ENCODE measurements at regions of chr16 and their contacts with region 1.

Region 1: DNA sequence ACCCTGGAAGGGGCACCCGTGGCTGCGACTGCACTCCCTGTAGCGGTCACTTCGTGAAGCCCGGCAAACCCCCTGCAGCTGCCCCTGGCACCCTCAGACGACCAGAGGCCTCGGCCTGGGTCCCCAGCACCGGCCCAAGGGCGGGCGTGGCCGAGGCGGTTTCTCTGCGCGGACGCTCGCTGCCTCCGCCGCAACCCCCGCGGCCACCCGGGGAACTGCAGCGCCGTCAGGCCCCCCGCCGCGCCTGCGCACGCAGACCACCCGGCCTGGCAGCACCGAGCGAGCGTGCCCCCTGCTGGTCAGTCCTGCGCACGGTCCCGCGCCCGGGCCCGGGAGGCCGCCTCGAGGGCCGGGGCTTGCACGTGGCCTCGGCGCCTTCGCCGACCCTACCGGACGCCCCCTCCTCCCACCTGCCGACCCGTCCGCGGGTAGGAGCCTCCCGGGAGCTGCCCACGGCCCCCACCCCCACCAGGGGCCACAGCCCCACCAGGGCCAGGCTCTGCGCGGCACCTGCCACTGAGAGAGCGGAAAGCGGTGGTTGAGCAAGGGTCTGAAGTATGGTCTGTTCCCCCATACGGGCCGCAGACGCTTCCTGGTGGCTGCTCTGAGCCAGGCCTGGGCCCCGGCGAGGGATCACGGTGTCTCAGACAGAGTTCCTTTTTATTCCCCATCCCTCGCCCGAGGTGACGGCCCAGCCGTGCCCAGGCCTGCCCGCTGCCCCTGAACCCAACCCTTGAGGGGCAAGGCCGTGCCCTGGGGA is 11.5 kb upstream of the HS3ST6 start:
- DNase-seq: peak; percentile 96
- ATAC-seq: peak; percentile 98
- H3K4me3 Mint-ChIP-seq: peak overlapping the region; percentile 47
- H3K27ac Mint-ChIP-seq: no peak overlapping the region
- H3K4me1 Mint-ChIP-seq: peaks cover 2% of the 10 kb centered on the region
- H3K27me3 Mint-ChIP-seq: peaks cover under 1% of the 10 kb centered on the region

Region 2: DNA sequence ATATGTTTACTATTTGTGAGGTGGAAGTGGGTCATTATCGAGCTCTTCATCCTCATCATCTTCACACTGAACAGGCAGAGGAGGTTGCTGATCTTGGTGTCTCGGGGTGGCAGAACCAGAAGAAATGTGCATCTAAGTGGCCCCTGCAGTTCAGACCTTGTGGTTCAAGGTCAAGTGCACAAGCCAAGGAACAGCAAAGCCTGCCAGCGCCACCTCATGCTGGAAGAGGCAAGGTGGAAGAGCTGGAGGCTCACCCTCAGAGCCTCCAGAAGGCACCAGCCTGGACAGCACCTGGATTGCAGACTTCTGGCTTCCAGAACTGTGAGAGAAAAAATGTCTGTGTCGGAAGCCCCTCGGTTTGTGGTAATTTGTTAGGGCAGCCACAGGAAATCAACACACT is 350.6 kb before region 1 on chr16:
- CTCF ChIA-PET with region 1: no interaction called
- POLR2A ChIA-PET with region 1: no interaction called
- intact Hi-C with region 1: no loop called
- DNase-seq: peak; percentile 25
- ATAC-seq: no peak
- H3K4me3 Mint-ChIP-seq: no peak overlapping the region
- H3K27ac Mint-ChIP-seq: no peak overlapping the region
- H3K4me1 Mint-ChIP-seq: no peaks in the 10 kb centered on the region
- H3K27me3 Mint-ChIP-seq: no peaks in the 10 kb centered on the region

Region 3: DNA sequence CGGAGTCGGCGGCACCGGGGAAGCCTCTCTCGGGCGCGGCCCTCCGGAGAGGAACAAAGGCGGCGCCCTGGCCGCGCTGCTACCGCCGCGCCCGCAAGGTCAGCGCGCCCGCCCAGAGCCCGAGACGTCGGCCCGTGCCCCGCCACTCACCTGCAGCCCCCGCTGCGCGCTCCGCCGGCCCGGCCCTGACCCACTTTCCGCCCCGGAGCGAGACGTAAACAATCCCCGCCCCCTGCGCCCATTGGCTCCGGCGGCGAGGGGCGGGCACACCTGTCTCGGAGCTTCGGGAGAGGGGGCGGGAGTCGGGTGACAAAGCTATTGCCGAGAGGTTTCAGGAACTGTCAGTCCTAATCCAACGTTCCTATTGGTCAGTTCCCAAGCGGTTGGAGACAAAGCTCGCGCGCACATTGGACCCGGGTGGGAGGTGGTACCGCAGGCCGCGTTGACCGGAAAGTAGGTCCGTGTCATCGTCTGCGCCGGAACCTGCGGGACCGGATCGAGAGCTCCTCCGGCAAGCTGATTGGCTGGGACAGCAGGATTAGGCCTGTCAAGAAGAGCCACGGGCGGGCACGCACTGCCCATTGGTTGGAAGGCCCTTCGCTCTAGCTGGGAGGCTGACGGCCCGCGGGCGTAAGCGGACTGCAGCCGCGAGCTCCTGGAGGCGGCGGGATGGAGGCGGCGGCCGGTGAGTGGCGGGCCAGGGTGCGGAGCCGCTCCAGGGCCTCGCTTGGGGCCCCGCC is 147.2 kb before region 1 on chr16 and contains the starts of genes NUBP2 and SPSB3:
- CTCF ChIA-PET with region 1: interaction called, 7 read pairs
- POLR2A ChIA-PET with region 1: no interaction called
- intact Hi-C with region 1: loop called in 1 of 2 experiments (anchors 1 kb)
- DNase-seq: peak; percentile 99
- ATAC-seq: peak; percentile 93
- H3K4me3 Mint-ChIP-seq: peak within 1 kb of the TSS; percentile 94
- H3K27ac Mint-ChIP-seq: peak within 1 kb of the TSS; percentile 85
- H3K4me1 Mint-ChIP-seq: peaks cover 26% of the 10 kb centered on the region
- H3K27me3 Mint-ChIP-seq: no peaks in the 10 kb centered on the region
- total RNA-seq, gene NUBP2: 34.4 to 42.4 TPM
- total RNA-seq, gene SPSB3: 12.5 to 13.6 TPM

Region 4: DNA sequence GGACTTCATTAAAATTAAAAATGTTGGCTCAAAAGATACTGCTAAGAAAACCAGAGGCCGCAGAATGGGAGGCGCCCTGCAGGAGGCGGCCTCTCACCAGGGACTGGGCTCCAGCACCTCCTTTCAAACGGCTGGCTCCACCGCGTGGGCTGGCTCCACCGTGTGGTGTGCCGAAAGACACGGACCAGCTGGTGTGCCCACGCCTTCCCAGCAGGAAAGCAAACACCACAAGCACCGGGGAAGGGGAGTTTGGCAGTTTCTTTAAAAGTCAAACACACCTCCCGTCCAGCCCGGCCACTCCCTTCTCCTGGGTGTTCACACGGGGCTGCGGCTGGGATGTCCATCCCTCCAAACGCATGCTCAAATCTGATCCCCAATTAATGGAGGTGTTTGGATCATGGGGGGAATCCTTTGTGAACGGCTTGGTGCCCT is 117.0 kb before region 1 on chr16:
- CTCF ChIA-PET with region 1: no interaction called
- POLR2A ChIA-PET with region 1: no interaction called
- intact Hi-C with region 1: loop called in 1 of 2 experiments (anchors 1 kb)
- DNase-seq: peak; percentile 85
- ATAC-seq: peak; percentile 96
- H3K4me3 Mint-ChIP-seq: no peak overlapping the region
- H3K27ac Mint-ChIP-seq: peak overlapping the region; percentile 65
- H3K4me1 Mint-ChIP-seq: peaks cover 10% of the 10 kb centered on the region
- H3K27me3 Mint-ChIP-seq: no peaks in the 10 kb centered on the region

Region 5: GRCh38 chr16:1863681-1864460 is 65.9 kb before region 1 on chr16:
- CTCF ChIA-PET with region 1: interaction called, 4 read pairs
- POLR2A ChIA-PET with region 1: no interaction called
- intact Hi-C with region 1: loop called (anchors 1 kb)
- DNase-seq: no peak
- ATAC-seq: no peak
- H3K4me3 Mint-ChIP-seq: no peak overlapping the region
- H3K27ac Mint-ChIP-seq: no peak overlapping the region
- H3K4me1 Mint-ChIP-seq: no peaks in the 10 kb centered on the region
- H3K27me3 Mint-ChIP-seq: peaks cover 15% of the 10 kb centered on the region

Region 6: DNA sequence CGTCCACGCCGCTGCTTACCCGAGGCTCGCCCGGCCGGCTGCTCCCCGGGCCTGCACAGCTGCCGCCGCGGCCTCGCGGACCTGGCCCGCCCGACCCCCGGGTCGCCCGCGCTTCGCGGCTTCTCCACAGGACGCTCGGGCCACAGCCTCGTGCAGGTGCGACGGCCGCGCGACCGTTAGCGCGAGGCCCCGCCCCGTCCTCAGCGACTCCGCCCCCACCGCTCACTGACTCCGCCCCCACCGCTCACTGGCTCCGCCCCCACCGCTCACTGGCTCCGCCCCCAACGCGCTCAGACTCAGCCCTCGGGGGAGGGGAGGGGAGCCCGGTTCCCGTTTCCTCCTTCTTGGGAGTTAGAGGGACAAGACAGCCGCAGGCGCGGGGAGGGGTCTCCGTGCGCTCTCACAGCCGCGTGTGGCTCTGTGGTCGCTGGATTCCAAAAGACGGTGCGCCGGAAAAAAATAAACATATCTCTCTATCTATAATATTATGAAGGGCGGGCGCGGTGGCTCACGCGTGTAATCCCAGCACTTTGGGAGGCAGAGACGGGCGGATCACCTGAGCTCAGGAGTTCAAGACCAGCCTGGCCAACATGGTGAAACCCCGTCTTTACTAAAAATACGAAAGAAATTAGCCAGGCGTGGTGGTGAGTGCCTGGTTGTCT is 57.7 kb before region 1 on chr16 and contains the start of gene MEIOB:
- CTCF ChIA-PET with region 1: no interaction called
- POLR2A ChIA-PET with region 1: no interaction called
- intact Hi-C with region 1: loop called in 1 of 2 experiments (anchors 2 kb)
- DNase-seq: peak; percentile 74
- ATAC-seq: peak; percentile 91
- H3K4me3 Mint-ChIP-seq: peak within 1 kb of the TSS; percentile 50
- H3K27ac Mint-ChIP-seq: no peak within 1 kb of the TSS
- H3K4me1 Mint-ChIP-seq: peaks cover 3% of the 10 kb centered on the region
- H3K27me3 Mint-ChIP-seq: peaks cover 17% of the 10 kb centered on the region
- total RNA-seq, gene MEIOB: 0.14 to 0.21 TPM

Region 7: GRCh38 chr16:1903845-1904840 is 25.6 kb before region 1 on chr16:
- CTCF ChIA-PET with region 1: no interaction called
- POLR2A ChIA-PET with region 1: no interaction called
- intact Hi-C with region 1: no loop called
- DNase-seq: no peak
- ATAC-seq: no peak
- H3K4me3 Mint-ChIP-seq: no peak overlapping the region
- H3K27ac Mint-ChIP-seq: no peak overlapping the region
- H3K4me1 Mint-ChIP-seq: no peaks in the 10 kb centered on the region
- H3K27me3 Mint-ChIP-seq: no peaks in the 10 kb centered on the region

Region 8: DNA sequence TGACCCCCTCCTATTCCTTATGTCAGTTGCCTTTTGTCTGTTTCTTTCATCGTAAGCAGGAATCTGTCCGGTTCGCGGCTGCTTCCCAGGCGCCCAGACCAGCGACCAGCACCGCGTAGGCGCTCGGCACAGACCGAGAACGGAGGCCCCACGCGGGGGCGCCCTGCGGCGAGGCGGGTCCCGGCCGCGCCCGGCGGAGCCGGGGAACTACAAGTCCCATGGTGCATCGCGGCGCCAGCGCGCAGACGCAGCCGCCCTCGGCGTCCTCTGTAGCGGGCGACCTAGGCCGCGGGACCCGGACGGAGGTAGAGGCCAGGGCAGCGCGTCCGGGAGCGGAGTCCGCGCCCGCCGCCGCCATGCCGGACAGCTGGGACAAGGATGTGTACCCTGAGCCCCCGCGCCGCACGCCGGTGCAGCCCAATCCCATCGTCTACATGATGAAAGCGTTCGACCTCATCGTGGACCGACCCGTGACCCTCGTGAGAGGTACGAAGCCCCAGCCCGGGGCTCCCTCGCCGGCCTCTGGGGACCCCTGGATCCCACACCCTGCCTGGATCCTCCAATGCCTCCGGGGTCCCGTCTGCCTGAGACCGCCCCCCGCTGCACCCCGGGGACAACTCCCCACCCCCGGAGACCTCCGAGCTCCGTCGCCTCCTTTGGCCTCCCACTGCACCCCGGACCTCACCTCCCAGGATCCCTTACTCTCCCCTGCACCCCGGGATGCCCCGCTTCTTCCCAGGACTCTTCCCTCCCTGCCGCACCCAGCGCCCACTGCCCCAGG is 29.7 kb after region 1 on chr16 and contains the start of gene NDUFB10:
- CTCF ChIA-PET with region 1: no interaction called
- POLR2A ChIA-PET with region 1: no interaction called
- intact Hi-C with region 1: loop called in 1 of 2 experiments (anchors 1 kb)
- DNase-seq: peak; percentile 96
- ATAC-seq: peak; percentile 77
- H3K4me3 Mint-ChIP-seq: peak within 1 kb of the TSS; percentile 96
- H3K27ac Mint-ChIP-seq: peak within 1 kb of the TSS; percentile 95
- H3K4me1 Mint-ChIP-seq: peaks cover 34% of the 10 kb centered on the region
- H3K27me3 Mint-ChIP-seq: no peaks in the 10 kb centered on the region
- total RNA-seq, gene NDUFB10: 113 to 118 TPM

Region 9: GRCh38 chr16:2095315-2095853 is 165.6 kb after region 1 on chr16:
- CTCF ChIA-PET with region 1: no interaction called
- POLR2A ChIA-PET with region 1: no interaction called
- intact Hi-C with region 1: no loop called
- DNase-seq: no peak
- ATAC-seq: no peak
- H3K4me3 Mint-ChIP-seq: no peak overlapping the region
- H3K27ac Mint-ChIP-seq: no peak overlapping the region
- H3K4me1 Mint-ChIP-seq: no peaks in the 10 kb centered on the region
- H3K27me3 Mint-ChIP-seq: no peaks in the 10 kb centered on the region

Region 10: DNA sequence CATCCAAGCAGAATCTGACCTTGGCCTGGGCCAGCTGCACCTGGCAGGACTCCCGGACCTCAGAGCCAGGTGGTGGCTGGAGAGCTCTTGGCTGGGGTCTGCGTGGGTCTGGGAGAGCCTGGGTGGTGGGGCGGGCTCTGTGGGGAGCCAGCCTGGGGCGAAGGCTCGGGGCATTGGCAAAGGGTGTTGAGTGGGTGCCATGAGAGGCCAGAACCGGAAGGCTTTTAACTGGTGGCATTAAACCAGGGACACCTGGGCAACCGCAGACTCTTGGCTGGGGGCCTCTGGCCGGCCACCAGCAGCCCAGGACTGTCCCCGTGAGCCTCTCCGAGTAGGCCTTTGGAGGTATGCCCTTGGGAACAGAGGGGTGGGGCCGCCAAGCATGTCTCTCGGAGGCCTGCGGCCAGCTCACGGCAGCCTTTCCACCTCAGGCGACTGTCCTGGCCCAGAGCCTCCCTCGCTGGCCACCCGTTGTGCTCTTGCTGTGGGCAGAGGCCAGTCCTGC is 773.5 kb after region 1 on chr16:
- CTCF ChIA-PET with region 1: no interaction called
- POLR2A ChIA-PET with region 1: no interaction called
- intact Hi-C with region 1: no loop called
- DNase-seq: no peak
- ATAC-seq: no peak
- H3K4me3 Mint-ChIP-seq: no peak overlapping the region
- H3K27ac Mint-ChIP-seq: no peak overlapping the region
- H3K4me1 Mint-ChIP-seq: no peaks in the 10 kb centered on the region
- H3K27me3 Mint-ChIP-seq: no peaks in the 10 kb centered on the region

Measured in activated CD4-positive, alpha-beta T cell treated with anti-CD3 and anti-CD28 coated beads for 36 hours (primary cell).